ENCODE measurements at regions of chr10 and their contacts with region 1.

Region 1: DNA sequence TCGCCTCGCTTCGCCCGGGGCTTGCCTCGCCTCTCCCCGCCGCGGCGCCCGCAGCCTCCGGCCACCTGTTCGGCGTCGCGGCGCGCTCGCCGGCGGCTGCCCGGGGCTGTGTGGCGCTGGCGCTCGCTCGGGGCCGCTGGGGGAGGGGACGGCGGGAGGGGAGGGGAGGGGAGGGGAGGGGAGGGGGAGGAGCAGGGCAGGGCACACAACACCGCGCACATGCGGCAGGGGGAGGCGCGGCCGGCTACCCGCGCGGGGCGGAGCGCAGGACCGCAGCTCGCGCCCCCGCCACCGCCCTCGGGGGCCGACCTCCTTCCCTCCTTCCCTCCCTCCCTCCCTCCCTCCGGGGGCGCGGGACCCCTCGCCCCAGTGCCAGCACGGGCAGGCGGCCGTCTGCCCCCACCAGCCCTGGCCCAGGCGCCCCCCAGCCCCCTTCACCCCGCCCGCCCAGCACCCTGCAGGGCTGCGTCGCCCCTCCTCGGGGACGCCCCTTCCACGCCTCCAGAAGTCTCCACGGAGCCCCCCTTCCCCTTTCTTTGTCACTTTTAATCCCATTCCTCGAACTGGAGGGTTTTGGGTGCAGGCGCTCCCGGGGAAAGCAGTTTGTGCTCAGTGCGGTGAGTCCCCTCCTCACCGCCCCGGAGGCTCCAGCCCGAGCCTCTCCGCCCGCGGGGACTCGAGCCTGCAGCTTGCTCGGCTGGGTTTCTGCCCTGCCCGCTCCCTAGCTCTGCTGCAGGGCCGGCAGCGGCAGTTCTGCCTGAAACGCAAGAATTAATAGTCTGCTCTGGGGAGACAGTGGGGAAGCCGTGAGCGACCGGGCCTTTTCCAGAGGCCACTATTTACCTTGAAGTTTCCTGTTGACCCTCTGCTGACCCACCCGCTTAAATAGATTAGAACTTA is at the start of gene PARD3:
- DNase-seq: peak; percentile 55 to 74
- H3K4me3 ChIP-seq: peak within 1 kb of the TSS; percentile 91 to 97
- H3K27ac ChIP-seq: peak within 1 kb of the TSS; percentile 76 to 87
- H3K4me1 ChIP-seq: peaks cover 0 to 31% (median 15%) of the 10 kb centered on the region in 4 donors
- H3K27me3 ChIP-seq: no peaks in the 10 kb centered on the region
- CTCF ChIP-seq: no peak

Region 2: GRCh38 chr10:34710391-34710751 is 105.1 kb before region 1 on chr10:
- intact Hi-C with region 1: loop called (anchors 10 kb)
- DNase-seq: peak in 1 of 2 donors; percentile 57
- H3K4me3 ChIP-seq: no peak overlapping the region
- H3K27ac ChIP-seq: no peak overlapping the region
- H3K4me1 ChIP-seq: peaks cover 0 to 46% (median 22%) of the 10 kb centered on the region in 4 donors
- H3K27me3 ChIP-seq: no peaks in the 10 kb centered on the region
- CTCF ChIP-seq: no peak

Measured in tibial artery (tissue), 4 donors.